Head of caudate nucleus (tissue), 42 donors: ENCODE measurements at regions of chr16 and their contacts with region 1.

Region 1: GRCh38 chr16:425082-425718 is at the start of gene RAB11FIP3:
- DNase-seq: peak; percentile 68 to 96 (median 90)

Region 2: DNA sequence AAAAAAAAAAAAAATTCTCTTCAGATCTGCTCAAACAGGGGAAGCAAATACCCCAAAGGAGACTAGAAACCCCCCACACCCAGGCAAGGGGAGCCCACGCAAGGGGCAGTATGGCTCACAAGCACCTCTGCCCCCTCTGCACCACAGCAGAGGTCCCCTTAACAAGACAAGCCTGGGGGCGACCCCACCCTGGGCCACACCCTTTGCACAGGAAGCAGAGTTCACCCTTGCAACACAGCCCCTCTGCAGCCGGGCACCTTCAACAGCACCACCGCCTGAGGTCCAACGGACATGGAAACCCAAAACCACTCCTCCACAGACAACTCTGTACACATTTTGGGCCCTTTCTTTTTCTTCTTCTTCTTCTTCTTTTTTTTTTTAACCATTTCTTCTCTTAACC is 85.5 kb before region 1 on chr16:
- intact Hi-C with region 1: no loop called
- DNase-seq: no peak

Region 3: GRCh38 chr16:457732-458400 is 32.7 kb after region 1 on chr16:
- intact Hi-C with region 1: no loop called
- DNase-seq: peak in 41 of 42 donors; percentile 26 to 87 (median 69)

Region 4: GRCh38 chr16:471353-472198 is 46.4 kb after region 1 on chr16:
- intact Hi-C with region 1: loop called (anchors 5 kb)
- DNase-seq: peak; percentile 83 to 97 (median 92)

Region 5: GRCh38 chr16:527006-527753 is 102.0 kb after region 1 on chr16 and contains the start of gene CAPN15:
- intact Hi-C with region 1: loop called (anchors 10 kb)
- DNase-seq: peak; percentile 59 to 93 (median 86)